Activated naive CD4-positive, alpha-beta T cell treated with anti-CD3 and anti-CD28 coated beads for 36 hours (primary cell): ENCODE measurements at regions of chr1 and their contacts with region 1.

Region 1: DNA sequence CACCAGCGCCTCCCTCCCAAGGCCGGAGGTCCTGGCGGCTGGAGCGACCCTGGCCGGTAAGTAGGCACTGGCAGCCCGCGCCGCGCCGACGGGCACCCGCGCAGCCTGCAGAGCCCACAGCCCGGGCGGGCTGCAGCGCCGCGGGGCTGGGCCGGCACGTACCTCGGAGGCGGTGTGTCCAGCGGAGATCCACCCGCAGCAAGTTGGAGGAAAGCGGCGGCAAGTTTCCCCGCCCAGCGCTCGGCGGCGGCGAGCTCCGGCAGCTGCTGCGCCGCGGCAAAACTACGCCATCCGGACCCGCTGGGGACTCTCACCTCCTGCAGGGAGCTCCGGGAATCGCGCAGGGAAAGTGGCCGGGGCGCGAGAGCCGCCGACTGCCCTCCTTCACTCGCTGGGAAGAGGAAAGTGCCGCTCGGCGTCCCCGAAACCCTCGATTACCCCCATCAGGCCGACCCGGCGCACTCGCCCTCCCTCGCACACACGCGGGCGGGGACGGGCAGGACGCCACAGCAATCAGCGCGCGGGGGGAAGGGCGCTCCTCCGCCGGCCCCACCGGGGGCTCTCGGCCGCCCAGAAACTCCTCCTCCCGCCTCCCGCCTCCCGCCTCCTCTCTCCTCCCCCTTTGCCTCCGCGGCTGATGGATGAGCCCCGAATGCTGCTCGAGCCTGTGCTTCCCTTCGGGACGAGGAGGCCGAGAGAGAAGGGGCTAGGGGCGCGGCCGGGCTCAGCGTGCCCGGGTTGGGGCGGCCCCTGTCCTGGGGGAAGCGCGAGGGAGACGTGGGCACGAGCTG is at the start of gene TGFBR3:
- DNase-seq: peak; percentile 74
- H3K4me3 Mint-ChIP-seq: peak within 1 kb of the TSS; percentile 85
- H3K27ac Mint-ChIP-seq: peak within 1 kb of the TSS; percentile 46
- H3K4me1 Mint-ChIP-seq: peaks cover 33% of the 10 kb centered on the region
- H3K27me3 Mint-ChIP-seq: peaks cover 15% of the 10 kb centered on the region
- total RNA-seq, gene TGFBR3: 3.2 to 3.3 TPM

Region 2: DNA sequence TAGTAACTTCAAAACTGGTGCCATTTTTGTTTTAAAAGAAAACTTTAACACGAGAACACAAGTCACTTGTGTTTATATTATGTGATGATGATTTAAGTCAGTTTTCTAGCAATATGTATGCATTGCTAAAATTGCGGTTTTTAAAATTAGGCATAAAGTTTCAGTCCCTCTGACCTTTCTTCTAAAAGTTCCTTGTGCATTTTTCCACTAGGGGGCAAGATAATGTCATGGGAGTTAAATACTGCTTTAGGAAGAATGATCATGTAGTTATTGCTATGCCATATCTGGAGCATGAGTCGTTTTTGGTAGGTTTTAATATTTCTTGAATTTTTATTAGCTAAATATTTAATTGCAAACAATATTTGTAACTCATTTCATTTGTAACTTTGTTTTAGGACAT is 374.5 kb before region 1 on chr1:
- CTCF ChIA-PET with region 1: interaction called, 6 read pairs
- intact Hi-C with region 1: loop called (anchors 1 kb)
- DNase-seq: no peak
- H3K4me3 Mint-ChIP-seq: no peak overlapping the region
- H3K27ac Mint-ChIP-seq: no peak overlapping the region
- H3K4me1 Mint-ChIP-seq: no peaks in the 10 kb centered on the region
- H3K27me3 Mint-ChIP-seq: no peaks in the 10 kb centered on the region

Region 3: DNA sequence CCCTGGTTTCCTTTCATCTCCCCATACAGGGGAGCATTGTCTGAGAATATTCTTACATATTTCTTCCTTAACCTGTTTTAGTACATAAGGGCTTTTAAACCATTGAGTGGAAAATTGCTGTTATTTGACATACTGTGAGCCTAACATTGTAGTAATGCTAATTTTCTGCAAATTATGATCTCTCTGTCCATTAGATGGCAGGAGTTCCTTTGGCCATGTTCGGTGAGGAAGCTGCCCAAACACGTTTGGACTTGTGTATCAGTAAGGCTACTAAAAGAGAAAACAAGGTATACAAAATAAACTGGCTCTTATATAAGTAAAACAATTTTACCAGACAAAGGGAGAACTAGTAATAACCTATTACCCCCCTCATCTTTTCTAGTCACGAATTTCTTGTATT is 356.1 kb before region 1 on chr1:
- CTCF ChIA-PET with region 1: no interaction called
- intact Hi-C with region 1: loop called (anchors 1 kb)
- DNase-seq: no peak
- H3K4me3 Mint-ChIP-seq: no peak overlapping the region
- H3K27ac Mint-ChIP-seq: no peak overlapping the region
- H3K4me1 Mint-ChIP-seq: peaks cover 6% of the 10 kb centered on the region
- H3K27me3 Mint-ChIP-seq: no peaks in the 10 kb centered on the region

Region 4: DNA sequence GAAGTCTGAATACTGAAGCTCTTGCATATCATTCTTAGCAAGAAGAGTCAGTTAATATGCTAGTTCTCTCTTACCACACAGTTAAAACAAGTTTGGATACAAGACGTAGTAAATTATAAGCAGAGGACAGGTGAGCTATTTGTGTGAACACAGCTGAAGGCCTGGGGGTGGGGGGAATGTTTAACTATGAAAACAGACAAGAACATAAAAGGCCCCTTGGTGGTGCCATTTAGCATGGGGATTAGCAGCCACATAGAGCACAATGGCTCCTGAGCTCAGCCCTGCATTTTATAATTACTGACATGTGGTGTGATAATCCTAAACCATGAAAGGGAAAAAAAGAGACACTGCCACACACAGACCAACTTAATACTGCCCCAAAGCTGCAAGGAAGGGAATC is 94.8 kb before region 1 on chr1:
- CTCF ChIA-PET with region 1: interaction called, 19 read pairs
- intact Hi-C with region 1: no loop called
- DNase-seq: peak; percentile 30
- H3K4me3 Mint-ChIP-seq: no peak overlapping the region
- H3K27ac Mint-ChIP-seq: no peak overlapping the region
- H3K4me1 Mint-ChIP-seq: peaks cover 20% of the 10 kb centered on the region
- H3K27me3 Mint-ChIP-seq: no peaks in the 10 kb centered on the region